GM12878 (cell line): ENCODE measurements at regions of chr3 and their contacts with region 1.

Region 1: DNA sequence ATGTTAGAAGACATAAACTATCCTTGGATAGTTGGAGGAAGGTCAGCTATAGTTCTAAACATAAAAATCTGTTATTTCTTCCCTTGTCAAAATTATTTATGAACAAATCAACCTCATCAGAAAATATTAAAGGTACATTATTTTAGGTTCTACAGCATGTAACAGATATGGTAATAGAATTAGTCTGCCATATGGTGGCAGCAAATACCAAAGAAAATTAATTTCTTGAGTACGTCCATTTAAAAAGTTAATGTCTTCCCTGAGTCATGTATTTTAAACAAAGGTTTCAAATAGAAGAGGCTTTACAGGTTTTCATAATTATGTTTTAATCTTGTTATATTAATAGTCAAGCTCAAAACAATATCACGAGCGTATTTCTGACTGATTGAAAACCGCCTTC is 17.9 kb upstream of the ANKRD28 start:
- DNase-seq: no peak
- ATAC-seq: peak; percentile 55
- H3K4me3 ChIP-seq: no peak overlapping the region
- H3K27ac ChIP-seq: no peak overlapping the region
- H3K4me1 ChIP-seq: peaks cover 39% of the 10 kb centered on the region
- H3K27me3 ChIP-seq: no peaks in the 10 kb centered on the region
- CTCF ChIP-seq: peak in 1 of 3 experiments; percentile 29; a peak in 2 of 6 replicates
- EP300 ChIP-seq: no peak
- POLR2A ChIP-seq: no peak
- RAD21 ChIP-seq: peak; percentile 64

Region 2: DNA sequence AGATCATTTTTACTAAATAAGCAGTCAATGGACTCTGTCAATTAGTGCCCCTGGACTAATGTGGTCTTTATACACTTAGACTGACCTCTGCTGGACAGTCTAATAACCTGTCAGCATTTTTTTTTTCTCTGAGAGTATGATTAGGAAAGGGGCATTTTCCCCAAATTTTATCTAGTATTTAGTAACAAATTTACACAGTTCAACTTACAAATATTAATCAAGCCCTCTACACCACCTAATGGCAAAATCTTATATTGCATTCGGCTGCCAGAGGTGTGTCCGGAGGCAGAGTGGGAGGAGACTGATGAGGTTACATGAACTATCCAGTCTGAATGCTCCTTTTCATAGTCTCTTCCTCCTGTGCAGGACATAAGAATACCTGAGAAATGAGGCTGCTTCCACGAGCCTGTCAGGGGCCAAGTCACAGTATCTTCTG is 258.2 kb before region 1 on chr3:
- CTCF ChIA-PET with region 1: interaction called, 9 read pairs
- POLR2A ChIA-PET with region 1: no interaction called
- RAD21 ChIA-PET with region 1: interaction called, 7 read pairs
- SMC1A ChIA-PET with region 1: interaction called, 13 read pairs
- in situ Hi-C with region 1: no loop called
- intact Hi-C with region 1: no loop called
- DNase-seq: peak; percentile 67
- ATAC-seq: peak; percentile 88
- H3K4me3 ChIP-seq: no peak overlapping the region
- H3K27ac ChIP-seq: no peak overlapping the region
- H3K4me1 ChIP-seq: peaks cover 13% of the 10 kb centered on the region
- H3K27me3 ChIP-seq: no peaks in the 10 kb centered on the region
- CTCF ChIP-seq: peak; percentile 37 to 64 (median 55); a peak in 4 of 6 replicates
- EP300 ChIP-seq: no peak
- POLR2A ChIP-seq: no peak
- RAD21 ChIP-seq: peak; percentile 52

Region 3: DNA sequence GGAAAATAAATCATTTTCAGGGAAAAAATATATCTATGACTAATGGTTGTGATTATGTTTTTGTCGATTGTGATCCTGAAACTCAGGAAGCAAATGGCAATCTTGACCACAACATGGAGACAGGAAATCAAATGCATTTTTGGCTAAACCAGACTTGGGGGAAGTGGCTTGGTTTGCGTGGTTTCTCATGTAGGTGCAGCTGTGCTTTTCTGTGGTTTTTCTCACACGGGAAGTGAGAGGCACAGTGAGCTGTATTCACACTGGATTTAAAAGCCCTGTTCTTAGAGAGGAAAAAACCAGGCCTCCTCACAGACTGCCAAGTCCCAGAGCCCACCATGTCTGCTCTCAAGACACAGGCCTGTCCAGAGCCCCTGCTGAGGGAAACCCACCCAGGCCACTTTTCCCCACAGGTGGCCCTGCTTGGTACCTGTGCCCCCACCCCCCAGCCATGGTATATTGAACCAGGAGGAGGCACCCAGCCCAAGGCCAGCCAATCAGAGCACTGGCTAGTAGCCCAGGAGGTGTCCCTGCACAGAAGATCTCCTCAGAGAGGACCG is 168.0 kb before region 1 on chr3:
- CTCF ChIA-PET with region 1: interaction called, 7 read pairs
- POLR2A ChIA-PET with region 1: interaction called, 3 read pairs
- RAD21 ChIA-PET with region 1: interaction called, 4 read pairs
- SMC1A ChIA-PET with region 1: interaction called, 12 read pairs
- in situ Hi-C with region 1: no loop called
- intact Hi-C with region 1: no loop called
- DNase-seq: peak; percentile 94
- ATAC-seq: peak; percentile 96
- H3K4me3 ChIP-seq: peak overlapping the region; percentile 24
- H3K27ac ChIP-seq: peak overlapping the region; percentile 81
- H3K4me1 ChIP-seq: peaks cover 38% of the 10 kb centered on the region
- H3K27me3 ChIP-seq: no peaks in the 10 kb centered on the region
- CTCF ChIP-seq: no peak
- EP300 ChIP-seq: peak; percentile 87 to 95
- POLR2A ChIP-seq: peak; percentile 30; the same call in 1 of the 2 replicates
- RAD21 ChIP-seq: no peak

Region 4: DNA sequence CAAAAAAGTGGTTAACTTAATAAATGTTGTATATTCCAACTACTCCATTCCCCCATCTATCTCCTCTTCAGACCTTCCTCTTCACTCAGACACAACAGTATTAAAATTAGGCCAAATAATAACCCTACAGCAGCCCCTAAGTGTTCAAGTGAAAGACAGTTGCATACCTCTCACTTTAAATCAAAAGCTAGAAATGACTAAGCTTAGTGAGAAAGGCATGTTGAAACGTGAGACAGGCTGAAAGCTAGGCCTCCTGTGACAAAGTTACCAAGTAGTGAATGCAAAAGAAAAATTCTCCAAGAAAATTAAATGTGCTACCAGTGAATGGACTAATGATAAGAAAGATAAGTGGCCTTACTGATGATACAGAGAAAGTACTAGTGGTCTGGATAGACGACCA is 89.7 kb before region 1 on chr3:
- CTCF ChIA-PET with region 1: interaction called, 7 read pairs
- POLR2A ChIA-PET with region 1: no interaction called
- RAD21 ChIA-PET with region 1: interaction called, 12 read pairs
- SMC1A ChIA-PET with region 1: interaction called, 19 read pairs
- in situ Hi-C with region 1: no loop called
- intact Hi-C with region 1: no loop called
- DNase-seq: peak; percentile 60
- ATAC-seq: peak; percentile 93
- H3K4me3 ChIP-seq: no peak overlapping the region
- H3K27ac ChIP-seq: peak overlapping the region; percentile 71
- H3K4me1 ChIP-seq: peaks cover 18% of the 10 kb centered on the region
- H3K27me3 ChIP-seq: no peaks in the 10 kb centered on the region
- CTCF ChIP-seq: no peak
- EP300 ChIP-seq: no peak
- POLR2A ChIP-seq: no peak
- RAD21 ChIP-seq: no peak

Region 5: DNA sequence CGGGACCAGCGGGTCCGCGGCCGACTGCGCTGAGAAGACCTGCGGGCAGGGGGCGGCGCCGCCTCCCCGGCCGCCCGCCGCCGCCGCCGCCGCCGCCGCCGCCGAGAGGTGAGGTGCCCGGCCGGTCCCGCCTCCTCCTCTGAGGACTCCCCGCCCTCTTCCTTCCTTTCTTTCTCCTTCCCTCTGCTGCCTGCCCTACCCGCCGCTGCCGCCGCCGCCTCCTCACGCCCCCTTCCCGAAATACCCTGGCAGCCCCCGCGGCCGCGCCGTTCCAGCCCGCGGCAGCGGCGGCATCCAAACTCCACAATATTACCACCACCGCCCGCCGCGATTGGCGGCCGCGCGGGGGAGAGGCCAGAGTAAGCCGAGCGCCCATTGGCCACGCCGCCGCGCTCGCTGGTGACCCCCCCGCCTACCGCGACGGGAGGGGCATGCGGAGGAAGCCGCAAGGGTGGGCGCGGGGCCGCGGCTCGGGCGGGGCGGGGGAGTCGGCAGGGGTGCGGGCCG is 43.9 kb after region 1 on chr3:
- CTCF ChIA-PET with region 1: interaction called, 3 read pairs
- POLR2A ChIA-PET with region 1: no interaction called
- RAD21 ChIA-PET with region 1: interaction called, 9 read pairs
- SMC1A ChIA-PET with region 1: interaction called, 7 read pairs
- in situ Hi-C with region 1: no loop called
- intact Hi-C with region 1: loop called (anchors 1 kb)
- DNase-seq: no peak
- ATAC-seq: peak; percentile 87
- H3K4me3 ChIP-seq: peak overlapping the region; percentile 86
- H3K27ac ChIP-seq: peak overlapping the region; percentile 78
- H3K4me1 ChIP-seq: 0 out of 2 replicates have a peak, but pooled peaks cover 3% of the 10 kb centered on the region
- H3K27me3 ChIP-seq: no peaks in the 10 kb centered on the region
- CTCF ChIP-seq: no peak
- EP300 ChIP-seq: no peak
- POLR2A ChIP-seq: peak; percentile 64
- RAD21 ChIP-seq: no peak

Region 6: DNA sequence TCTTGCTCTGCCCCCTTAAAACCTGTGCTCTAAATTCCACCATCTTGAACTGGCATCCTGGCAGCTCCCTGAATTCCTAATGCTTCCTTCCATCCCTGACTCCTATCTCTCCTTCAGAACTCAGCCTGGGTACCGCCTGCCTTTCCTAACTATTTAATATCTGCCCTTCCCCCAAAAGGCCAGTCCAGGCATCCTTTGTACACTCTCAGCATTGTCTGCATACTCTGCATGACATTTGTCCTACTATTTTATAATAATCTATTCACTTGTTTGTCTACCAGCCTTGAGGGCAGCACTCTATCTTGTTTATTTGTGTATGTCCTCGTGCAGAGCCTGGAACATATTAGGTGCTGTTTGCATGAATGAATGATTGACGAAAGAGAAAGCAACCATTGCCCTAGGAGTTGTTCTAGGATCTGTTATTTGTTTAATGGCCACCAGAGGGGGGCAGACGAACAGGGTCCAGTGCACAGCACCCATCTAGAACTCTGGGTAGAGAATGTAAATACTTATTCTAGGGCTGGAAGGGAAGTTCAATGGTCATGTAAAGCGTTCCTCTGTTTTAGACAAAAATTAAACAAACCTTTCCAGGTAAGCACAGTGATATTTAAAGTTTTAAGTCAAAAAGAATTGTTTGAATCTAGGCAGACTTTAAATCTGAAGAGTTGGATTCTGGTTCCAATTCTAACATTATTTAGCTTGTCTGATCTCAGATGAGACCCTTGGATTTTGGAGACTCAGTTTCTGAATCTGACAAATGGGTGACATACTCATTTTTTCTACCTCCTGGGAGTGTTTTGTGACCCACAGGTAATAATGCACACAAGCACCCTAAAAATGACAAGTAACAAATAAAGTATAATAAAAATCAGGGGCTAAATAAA is 233.0 kb after region 1 on chr3:
- CTCF ChIA-PET with region 1: interaction called, 21 read pairs
- POLR2A ChIA-PET with region 1: no interaction called
- RAD21 ChIA-PET with region 1: interaction called, 5 read pairs
- SMC1A ChIA-PET with region 1: interaction called, 13 read pairs
- in situ Hi-C with region 1: no loop called
- intact Hi-C with region 1: loop called (anchors 1 kb)
- DNase-seq: peak; percentile 24
- ATAC-seq: peak; percentile 100
- H3K4me3 ChIP-seq: no peak overlapping the region
- H3K27ac ChIP-seq: no peak overlapping the region
- H3K4me1 ChIP-seq: no peaks in the 10 kb centered on the region
- H3K27me3 ChIP-seq: no peaks in the 10 kb centered on the region
- CTCF ChIP-seq: peak; percentile 68 to 89 (median 73)
- EP300 ChIP-seq: no peak
- POLR2A ChIP-seq: no peak
- RAD21 ChIP-seq: peak; percentile 97